ENCODE measurements at regions of chr9 and their contacts with region 1.

Region 1: DNA sequence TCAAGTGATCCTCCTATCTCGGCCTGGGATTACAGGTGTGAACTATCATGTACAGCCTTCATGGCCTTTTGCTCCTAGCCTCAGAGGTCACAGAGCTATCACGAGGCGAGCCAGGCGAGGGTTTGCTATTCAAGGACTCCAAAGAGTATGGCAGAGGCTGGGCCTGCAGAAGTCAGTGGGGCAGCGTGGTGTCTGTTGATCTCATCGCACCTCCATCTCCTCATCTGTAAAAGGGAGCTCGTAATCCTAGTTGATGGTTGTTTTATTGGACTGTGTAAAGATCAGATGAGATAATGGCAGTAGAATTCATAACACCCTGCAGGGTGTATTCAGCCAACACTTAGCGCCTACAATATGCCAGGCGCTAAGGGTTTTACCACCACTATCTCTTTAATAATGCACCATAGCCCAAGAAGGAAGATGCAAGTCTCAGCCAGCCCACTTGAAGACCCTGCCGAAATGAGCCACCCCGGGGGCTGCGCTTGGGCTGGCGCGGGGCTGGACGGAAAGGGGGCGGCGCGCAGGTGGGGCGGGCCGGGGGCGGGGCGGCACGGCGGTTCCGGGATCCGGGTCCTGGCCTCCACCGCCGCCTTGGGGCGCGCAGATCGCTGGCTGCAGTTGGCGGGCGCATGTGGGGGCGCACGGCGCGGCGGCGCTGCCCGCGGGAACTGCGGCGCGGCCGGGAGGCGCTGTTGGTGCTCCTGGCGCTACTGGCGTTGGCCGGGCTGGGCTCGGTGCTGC is at the start of gene GALNT12:
- DNase-seq: peak in 8 of 10 donors; percentile 25 to 79 (median 50)
- H3K4me3 ChIP-seq: peak within 1 kb of the TSS; percentile 46 to 81 (median 65)
- H3K27ac ChIP-seq: peak within 1 kb of the TSS in 52 of 59 donors; percentile 1 to 82 (median 58)
- H3K27me3 ChIP-seq: no peaks in the 10 kb centered on the region
- CTCF ChIP-seq: peak in 16 of 56 donors; percentile 5 to 47 (median 18)
- total RNA-seq, gene GALNT12: 1.6 to 9.7 (median 3.9) TPM

Region 2: GRCh38 chr9:98766586-98766985 is 40.7 kb before region 1 on chr9:
- intact Hi-C with region 1: no loop called
- DNase-seq: no peak
- H3K4me3 ChIP-seq: no peak overlapping the region
- H3K27ac ChIP-seq: no peak overlapping the region
- H3K27me3 ChIP-seq: no peaks in the 10 kb centered on the region
- CTCF ChIP-seq: no peak

Region 3: GRCh38 chr9:98848450-98849149 is 41.4 kb after region 1 on chr9:
- intact Hi-C with region 1: loop called in 1 of 2 experiments (anchors 5 kb)
- DNase-seq: peak; percentile 90 to 95 (median 92)
- H3K4me3 ChIP-seq: peak overlapping the region in 57 of 59 donors; percentile 2 to 60 (median 39)
- H3K27ac ChIP-seq: peak overlapping the region in 13 of 59 donors; percentile 1 to 69 (median 33)
- H3K27me3 ChIP-seq: no peaks in the 10 kb centered on the region
- CTCF ChIP-seq: peak; percentile 80 to 99 (median 93)

Region 4: DNA sequence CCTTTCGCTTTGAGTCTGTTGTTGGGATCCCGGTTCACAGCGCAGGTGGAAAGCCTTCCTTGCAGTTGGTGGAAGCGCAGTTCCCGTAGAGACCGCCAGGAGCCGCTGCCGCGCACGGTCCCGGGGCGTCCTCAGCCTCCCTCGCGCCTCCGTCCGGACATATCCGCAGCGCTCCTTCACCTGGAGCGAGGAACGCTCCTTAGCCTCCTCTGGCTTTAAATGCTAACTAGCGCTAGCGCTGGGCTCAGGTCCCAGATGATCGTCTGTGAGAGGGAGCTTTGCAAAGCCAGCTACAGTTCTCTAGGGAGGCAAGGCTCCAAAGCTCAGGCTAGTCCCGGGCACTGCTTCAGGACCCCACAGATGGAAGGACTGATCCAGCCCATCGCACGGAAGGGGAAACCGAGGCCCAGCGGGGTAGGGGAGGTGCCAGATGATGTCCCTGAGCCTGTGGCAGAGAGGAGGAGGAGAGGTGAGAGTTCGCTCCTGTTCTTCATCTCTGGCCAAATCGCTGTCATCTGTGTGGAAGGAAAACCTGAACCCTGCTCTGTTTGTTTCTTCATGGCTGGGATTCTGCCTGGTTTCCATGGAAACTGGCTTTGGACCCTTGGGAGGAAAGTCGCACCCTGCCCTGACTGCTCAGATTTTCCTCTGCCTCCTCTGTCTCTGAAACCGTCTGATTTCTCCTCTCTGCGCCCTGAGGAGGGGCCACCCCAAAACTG is 167.9 kb after region 1 on chr9:
- intact Hi-C with region 1: loop called (anchors 5 kb)
- DNase-seq: peak in 9 of 10 donors; percentile 69 to 88 (median 78)
- H3K4me3 ChIP-seq: peak overlapping the region in 57 of 59 donors; percentile 11 to 67 (median 44)
- H3K27ac ChIP-seq: peak overlapping the region in 1 of 59 donors; percentile 25
- H3K27me3 ChIP-seq: peaks cover 0 to 7% (median 0%) of the 10 kb centered on the region in 45 donors
- CTCF ChIP-seq: peak; percentile 69 to 99 (median 96)

Region 5: DNA sequence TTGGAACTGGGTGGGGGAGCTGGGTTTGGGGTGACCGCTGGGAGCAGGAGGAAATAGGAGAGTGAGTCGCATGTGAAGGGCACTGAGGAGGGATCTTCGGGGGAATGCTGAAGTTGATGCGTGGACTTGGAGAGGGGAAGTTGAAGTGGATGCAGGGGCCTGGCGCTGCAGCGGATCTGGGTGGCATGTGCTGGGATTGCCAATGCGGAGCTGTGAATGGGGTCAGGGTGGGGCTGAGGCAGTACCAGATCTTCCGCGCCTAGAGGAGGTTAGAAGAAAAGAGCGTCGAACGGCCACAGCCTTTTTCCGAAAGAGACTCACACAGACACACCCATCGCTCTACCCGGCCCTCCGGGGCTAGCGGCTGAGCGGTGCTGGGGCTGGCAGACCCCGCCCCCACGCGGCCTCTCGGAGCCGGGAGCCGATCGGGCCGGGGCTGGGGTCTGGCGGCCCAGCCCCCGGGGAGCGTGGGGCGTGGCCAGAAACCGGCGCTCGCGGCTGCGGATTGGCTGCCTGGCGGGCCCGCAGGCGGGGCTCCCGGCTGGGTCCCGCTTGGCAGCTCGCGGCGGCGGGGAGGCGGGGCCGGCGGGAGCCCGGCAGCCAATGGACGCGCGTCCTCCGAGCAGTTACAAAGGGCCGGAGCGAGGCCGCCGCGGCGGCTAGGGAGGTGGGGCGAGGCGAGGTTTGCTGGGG is 297.4 kb after region 1 on chr9 and contains the start of gene TGFBR1:
- intact Hi-C with region 1: loop called in 1 of 2 experiments (anchors 5 kb)
- DNase-seq: peak; percentile 87 to 98 (median 91)
- H3K4me3 ChIP-seq: peak within 1 kb of the TSS; percentile 54 to 88 (median 79)
- H3K27ac ChIP-seq: peak within 1 kb of the TSS in 55 of 59 donors; percentile 29 to 90 (median 77)
- H3K27me3 ChIP-seq: no peaks in the 10 kb centered on the region
- CTCF ChIP-seq: peak in 24 of 56 donors; percentile 8 to 52 (median 22)
- total RNA-seq, gene TGFBR1: 9.7 to 58.1 (median 21.3) TPM

Region 6: GRCh38 chr9:99259231-99259918 is 452.1 kb after region 1 on chr9:
- intact Hi-C with region 1: no loop called
- DNase-seq: peak; percentile 70 to 96 (median 84)
- H3K4me3 ChIP-seq: peak overlapping the region; percentile 13 to 72 (median 53)
- H3K27ac ChIP-seq: peak overlapping the region; percentile 38 to 94 (median 85)
- H3K27me3 ChIP-seq: no peaks in the 10 kb centered on the region
- CTCF ChIP-seq: peak in 7 of 56 donors; percentile 7 to 43 (median 10)